Thyroid gland (tissue), 4 donors: ENCODE measurements at regions of chr19 and their contacts with region 1.

Region 1: GRCh38 chr19:20513179-20513934 is 52.2 kb downstream of the ZNF737 start:
- DNase-seq: peak; percentile 83 to 86
- H3K4me3 ChIP-seq: no peak overlapping the region
- H3K27ac ChIP-seq: peak overlapping the region; percentile 80 to 82 (median 81)
- H3K4me1 ChIP-seq: peaks cover 9 to 26% of the 10 kb centered on the region in 2 donors
- H3K27me3 ChIP-seq: no peaks in the 10 kb centered on the region
- CTCF ChIP-seq: peak in 4 of 6 experiments; percentile 52 to 58 (median 54)
- POLR2A ChIP-seq: peak in 1 of 2 donors; percentile 52

Region 2: GRCh38 chr19:20247016-20247683 is 266.2 kb before region 1 on chr19:
- intact Hi-C with region 1: loop called (anchors 10 kb)
- DNase-seq: peak; percentile 82 to 85
- H3K4me3 ChIP-seq: no peak overlapping the region
- H3K27ac ChIP-seq: peak overlapping the region; percentile 76 to 93 (median 84)
- H3K4me1 ChIP-seq: peaks cover 53 to 59% of the 10 kb centered on the region in 2 donors
- H3K27me3 ChIP-seq: no peaks in the 10 kb centered on the region
- CTCF ChIP-seq: peak in 5 of 6 experiments; percentile 51 to 92 (median 88)
- POLR2A ChIP-seq: peak in 1 of 2 donors; percentile 13

Region 3: DNA sequence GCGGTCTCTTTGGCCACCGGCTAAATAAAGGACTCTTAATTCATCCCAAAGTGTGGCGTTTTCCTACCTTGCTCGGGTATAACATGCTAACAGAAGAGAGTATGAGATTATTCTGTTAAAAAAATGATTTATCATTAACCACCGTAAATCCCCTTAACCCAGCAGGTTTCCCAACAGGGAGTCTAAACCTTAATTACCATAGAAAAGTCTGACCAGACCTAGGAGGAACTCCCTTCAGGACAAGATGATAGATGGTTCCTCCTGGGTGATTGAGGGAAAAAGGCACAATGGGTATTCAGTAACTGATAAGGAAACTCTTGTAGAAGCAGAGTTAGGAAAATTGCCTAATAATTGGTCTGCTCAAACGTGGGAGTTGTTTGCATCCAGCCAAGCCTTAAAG is 141.4 kb before region 1 on chr19:
- intact Hi-C with region 1: loop called (anchors 10 kb)
- DNase-seq: no peak
- H3K4me3 ChIP-seq: no peak overlapping the region
- H3K27ac ChIP-seq: no peak overlapping the region
- H3K4me1 ChIP-seq: peaks cover 4 to 12% of the 10 kb centered on the region in 2 donors
- H3K27me3 ChIP-seq: no peaks in the 10 kb centered on the region
- CTCF ChIP-seq: no peak
- POLR2A ChIP-seq: no peak

Region 4: DNA sequence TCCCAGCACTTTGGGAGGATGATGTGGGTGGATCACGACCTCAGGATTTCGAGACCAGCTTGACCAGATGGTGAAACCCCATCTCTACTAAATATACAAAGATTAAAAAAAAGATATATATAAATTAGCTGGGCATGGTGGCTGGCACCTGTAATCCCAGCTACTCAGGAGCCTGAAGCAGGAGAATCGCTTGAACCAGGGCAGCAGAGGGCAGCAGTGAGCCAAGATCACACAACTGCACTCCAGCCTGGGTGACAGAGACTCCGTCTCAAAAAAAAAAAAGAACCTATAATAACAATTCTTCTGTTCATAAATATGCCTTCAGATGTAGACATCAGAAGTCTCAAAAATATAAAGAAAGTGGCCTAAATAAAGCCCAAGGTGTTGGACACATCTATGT is 44.7 kb after region 1 on chr19:
- intact Hi-C with region 1: no loop called
- DNase-seq: peak; percentile 75 to 82
- H3K4me3 ChIP-seq: no peak overlapping the region
- H3K27ac ChIP-seq: no peak overlapping the region
- H3K4me1 ChIP-seq: peaks cover 27 to 31% of the 10 kb centered on the region in 2 donors
- H3K27me3 ChIP-seq: no peaks in the 10 kb centered on the region
- CTCF ChIP-seq: peak in 5 of 6 experiments; percentile 37 to 66 (median 56)
- POLR2A ChIP-seq: no peak